MCF 10A (cell line): ENCODE measurements at regions of chr3 and their contacts with region 1.

Region 1: GRCh38 chr3:59559721-59560435 is 510.1 kb upstream of the CFAP20DC start:
- DNase-seq: peak; percentile 98
- H3K4me3 Mint-ChIP-seq: no peak overlapping the region
- H3K27ac Mint-ChIP-seq: peak overlapping the region; percentile 65
- H3K4me1 Mint-ChIP-seq: peaks cover 45% of the 10 kb centered on the region
- H3K27me3 Mint-ChIP-seq: no peaks in the 10 kb centered on the region
- CTCF ChIP-seq: no peak

Region 2: DNA sequence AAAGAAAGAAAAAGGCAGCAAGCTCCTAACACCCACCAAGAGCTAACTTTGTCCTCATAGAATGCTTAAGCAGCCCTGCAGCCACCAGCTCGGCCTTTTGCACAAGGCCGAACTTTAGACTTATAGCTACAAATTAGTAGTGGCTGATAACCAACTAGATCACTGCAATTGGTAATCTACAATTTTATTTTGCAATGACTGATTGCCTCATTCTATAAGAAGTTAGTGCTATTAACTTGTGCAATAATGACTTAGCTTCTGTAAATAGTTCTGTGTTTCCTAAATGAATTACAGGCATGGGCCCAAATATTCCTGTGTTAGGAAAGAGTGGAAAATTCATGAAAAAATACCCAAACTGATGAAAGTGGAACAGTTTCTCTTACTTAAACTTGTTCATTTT is 225.3 kb before region 1 on chr3:
- CTCF ChIA-PET with region 1: no interaction called
- POLR2A ChIA-PET with region 1: no interaction called
- intact Hi-C with region 1: loop called (anchors 5 kb)
- DNase-seq: peak; percentile 59
- H3K4me3 Mint-ChIP-seq: no peak overlapping the region
- H3K27ac Mint-ChIP-seq: peak overlapping the region; percentile 89
- H3K4me1 Mint-ChIP-seq: peaks cover 28% of the 10 kb centered on the region
- H3K27me3 Mint-ChIP-seq: no peaks in the 10 kb centered on the region
- CTCF ChIP-seq: no peak

Region 3: GRCh38 chr3:59480486-59480995 is 79.3 kb before region 1 on chr3:
- CTCF ChIA-PET with region 1: no interaction called
- POLR2A ChIA-PET with region 1: interaction called, 3 read pairs
- intact Hi-C with region 1: loop called (anchors 5 kb)
- DNase-seq: peak; percentile 75
- H3K4me3 Mint-ChIP-seq: peak overlapping the region; percentile 38
- H3K27ac Mint-ChIP-seq: peak overlapping the region; percentile 55
- H3K4me1 Mint-ChIP-seq: peaks cover 25% of the 10 kb centered on the region
- H3K27me3 Mint-ChIP-seq: no peaks in the 10 kb centered on the region
- CTCF ChIP-seq: no peak